IMR-90 (cell line): ENCODE measurements at regions of chr17 and their contacts with region 1.

Region 1: GRCh38 chr17:82241183-82241925 is 12.5 kb downstream of the SLC16A3 start:
- DNase-seq: peak; percentile 36
- ATAC-seq: peak; percentile 9
- H3K4me3 ChIP-seq: no peak overlapping the region
- H3K27ac ChIP-seq: peak overlapping the region; percentile 50
- H3K4me1 ChIP-seq: peaks cover 39% of the 10 kb centered on the region
- H3K27me3 ChIP-seq: no peaks in the 10 kb centered on the region
- CTCF ChIP-seq: no peak
- POLR2A ChIP-seq: no peak
- RAD21 ChIP-seq: no peak

Region 2: DNA sequence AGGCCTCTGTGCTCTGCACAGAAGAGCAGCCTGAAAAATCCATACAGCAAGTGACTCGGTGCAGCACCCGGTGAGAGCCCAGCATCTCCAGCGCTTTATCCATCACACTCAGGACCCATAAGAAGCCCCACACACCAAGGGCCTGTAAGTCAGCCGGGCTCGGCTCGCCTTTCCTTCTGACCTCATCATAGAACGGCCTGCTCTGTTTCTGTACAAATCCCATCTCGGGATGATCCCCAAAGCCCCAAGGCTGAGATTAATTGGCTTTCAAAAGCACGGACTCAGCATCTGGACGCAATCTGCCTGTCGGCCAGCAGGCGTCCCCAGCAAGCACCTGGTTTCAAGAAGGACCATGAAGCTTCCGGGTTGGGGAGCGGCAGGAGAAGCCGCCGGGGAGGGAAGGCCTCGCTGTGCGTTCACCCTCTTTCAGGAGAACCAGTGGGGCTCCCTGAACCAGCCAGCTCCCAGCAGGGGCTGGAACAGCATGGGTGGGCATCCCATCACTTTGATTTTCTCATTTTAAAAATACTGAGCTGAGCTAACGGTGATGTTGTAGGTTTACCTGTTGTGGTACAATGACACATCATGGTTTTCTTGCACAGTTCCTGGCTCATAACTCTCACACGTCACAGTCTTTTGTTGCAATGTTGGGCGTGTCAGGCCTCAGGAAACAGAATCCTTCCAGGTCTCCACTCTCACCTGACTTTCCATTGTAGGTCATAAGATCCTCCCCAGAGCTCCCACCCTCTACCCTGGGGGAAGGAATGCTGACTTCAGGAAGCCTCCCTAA is 35.4 kb before region 1 on chr17:
- CTCF ChIA-PET with region 1: interaction called, 3 read pairs
- POLR2A ChIA-PET with region 1: no interaction called
- dilution Hi-C with region 1: no loop called
- in situ Hi-C with region 1: no loop called
- intact Hi-C with region 1: loop called (anchors 5 kb)
- DNase-seq: peak; percentile 84
- ATAC-seq: peak; percentile 91
- H3K4me3 ChIP-seq: no peak overlapping the region
- H3K27ac ChIP-seq: peak overlapping the region; percentile 12
- H3K4me1 ChIP-seq: peaks cover 11% of the 10 kb centered on the region
- H3K27me3 ChIP-seq: no peaks in the 10 kb centered on the region
- CTCF ChIP-seq: peak; percentile 82
- POLR2A ChIP-seq: no peak
- RAD21 ChIP-seq: peak; percentile 76

Region 3: DNA sequence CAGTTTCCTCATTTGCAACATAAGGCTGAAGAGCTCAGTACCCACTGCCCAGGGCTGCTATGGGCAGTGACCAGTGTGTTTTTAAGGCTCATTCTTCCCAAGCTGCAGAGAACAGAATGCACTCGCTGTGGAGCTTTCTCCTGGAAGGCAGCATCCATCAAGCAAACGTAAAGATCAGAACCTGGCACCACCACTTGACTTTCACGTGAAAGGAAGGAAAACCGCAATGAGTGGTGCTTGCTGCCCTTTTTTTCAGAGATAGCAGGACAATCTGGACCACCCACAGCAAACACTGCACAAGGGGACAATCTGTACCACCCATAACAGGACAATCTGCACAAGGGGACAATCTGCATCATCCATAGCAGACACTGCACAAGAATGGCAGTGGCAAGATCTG is 21.0 kb after region 1 on chr17:
- CTCF ChIA-PET with region 1: no interaction called
- POLR2A ChIA-PET with region 1: no interaction called
- dilution Hi-C with region 1: no loop called
- in situ Hi-C with region 1: no loop called
- intact Hi-C with region 1: no loop called
- DNase-seq: no peak
- ATAC-seq: no peak
- H3K4me3 ChIP-seq: no peak overlapping the region
- H3K27ac ChIP-seq: no peak overlapping the region
- H3K4me1 ChIP-seq: peaks cover 12% of the 10 kb centered on the region
- H3K27me3 ChIP-seq: no peaks in the 10 kb centered on the region
- CTCF ChIP-seq: no peak
- POLR2A ChIP-seq: no peak
- RAD21 ChIP-seq: no peak

Region 4: DNA sequence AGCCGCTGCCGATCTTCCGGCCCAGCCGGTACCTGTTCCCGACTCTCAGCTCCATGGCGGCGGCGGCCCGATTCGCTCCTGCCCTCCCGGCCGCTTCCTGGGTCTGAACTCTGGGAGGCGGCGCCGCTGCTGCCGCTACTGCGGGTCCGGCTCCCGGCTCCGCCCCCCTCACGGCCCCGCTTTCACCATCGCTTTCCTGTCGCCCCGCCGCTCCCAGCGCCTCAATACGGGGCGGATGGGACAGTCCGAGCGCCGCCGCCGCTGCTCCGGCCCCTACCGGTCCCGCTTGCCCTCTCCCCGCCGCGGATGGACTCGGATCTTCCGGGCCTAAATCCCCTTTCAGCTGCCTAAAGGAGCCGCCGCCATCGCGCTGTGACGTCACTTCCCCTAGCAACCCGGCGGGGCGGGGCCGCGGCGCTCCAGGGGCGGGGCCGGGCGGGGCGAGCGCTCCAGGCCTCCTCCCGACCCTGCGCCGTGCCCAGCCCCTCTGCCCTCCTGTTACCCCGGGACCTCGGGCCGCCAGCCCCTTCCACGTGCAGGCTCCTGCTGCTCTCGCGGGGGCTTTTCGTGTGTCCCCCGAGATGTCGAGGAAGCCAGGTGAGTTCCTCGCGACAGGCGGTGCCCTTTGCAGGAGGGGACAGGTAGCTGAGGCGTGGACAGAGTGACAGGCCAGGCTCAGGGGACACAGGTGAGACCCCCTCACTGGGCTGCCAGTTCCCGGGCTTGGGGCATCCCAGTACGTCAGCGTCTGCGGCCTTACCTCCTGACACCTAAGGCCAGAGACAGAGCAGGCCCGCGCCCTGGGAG is 32.2 kb after region 1 on chr17 and contains the start of gene CSNK1D:
- CTCF ChIA-PET with region 1: no interaction called
- POLR2A ChIA-PET with region 1: no interaction called
- dilution Hi-C with region 1: no loop called
- in situ Hi-C with region 1: no loop called
- intact Hi-C with region 1: no loop called
- DNase-seq: peak; percentile 74
- ATAC-seq: peak; percentile 93
- H3K4me3 ChIP-seq: peak within 1 kb of the TSS; percentile 99
- H3K27ac ChIP-seq: peak within 1 kb of the TSS; percentile 96
- H3K4me1 ChIP-seq: peaks cover 24% of the 10 kb centered on the region
- H3K27me3 ChIP-seq: no peaks in the 10 kb centered on the region
- CTCF ChIP-seq: no peak
- POLR2A ChIP-seq: peak; percentile 90
- RAD21 ChIP-seq: no peak
- total RNA-seq, gene CSNK1D: 38.3 and 47.1 TPM in 2 replicates

Region 5: DNA sequence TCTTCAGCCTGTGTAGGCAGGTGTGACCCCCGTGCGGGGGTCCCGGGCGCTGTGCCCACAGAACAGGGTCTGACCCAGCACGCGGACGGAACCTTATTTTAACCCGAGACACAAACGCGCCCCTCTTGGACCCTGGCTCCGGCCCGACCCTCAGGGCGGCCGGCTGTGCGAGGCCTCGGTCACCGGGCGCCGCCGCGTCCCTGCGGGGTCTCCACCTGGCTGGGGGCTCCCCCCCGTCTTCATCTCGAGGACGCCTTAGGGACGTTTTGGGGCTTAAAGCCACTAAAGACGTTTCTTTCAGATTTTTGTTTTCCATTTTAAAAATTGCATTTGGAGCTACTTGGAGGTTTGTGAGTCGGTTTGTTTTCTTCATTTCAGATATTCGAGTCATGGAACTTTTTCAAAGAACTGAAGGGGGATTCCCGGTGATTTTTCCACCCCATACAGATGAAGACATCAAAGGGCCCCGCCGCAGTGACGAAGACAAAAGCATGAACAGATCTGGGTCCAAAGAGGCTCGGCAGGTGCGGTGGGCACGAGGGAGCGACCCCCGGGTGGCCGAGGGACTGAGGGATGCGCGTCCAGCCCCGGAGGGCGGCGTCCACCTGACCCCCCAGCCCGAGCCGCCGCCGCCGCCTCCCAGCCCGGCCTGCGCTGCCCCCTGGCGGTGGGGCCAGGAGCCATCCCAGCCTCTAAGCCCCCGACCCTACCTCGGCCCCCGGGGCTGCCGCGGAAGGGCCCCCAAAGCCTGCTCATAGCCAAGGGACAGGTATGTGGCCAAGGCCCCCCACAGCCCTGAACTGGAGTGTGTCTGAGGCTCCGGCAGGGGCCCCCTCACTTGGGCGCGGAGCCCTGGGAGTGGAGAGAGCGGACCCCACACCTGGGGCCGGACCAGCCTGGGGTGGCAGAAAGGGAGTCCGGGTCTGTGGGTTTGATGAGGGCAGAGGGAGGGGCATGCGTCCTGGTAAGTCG is 79.9 kb after region 1 on chr17:
- CTCF ChIA-PET with region 1: no interaction called
- POLR2A ChIA-PET with region 1: no interaction called
- dilution Hi-C with region 1: no loop called
- in situ Hi-C with region 1: no loop called
- intact Hi-C with region 1: loop called (anchors 5 kb)
- DNase-seq: no peak
- ATAC-seq: peak; percentile 80
- H3K4me3 ChIP-seq: no peak overlapping the region
- H3K27ac ChIP-seq: no peak overlapping the region
- H3K4me1 ChIP-seq: no peaks in the 10 kb centered on the region
- H3K27me3 ChIP-seq: peaks cover 10% of the 10 kb centered on the region; the same call in 1 of the 2 replicates
- CTCF ChIP-seq: peak; percentile 66
- POLR2A ChIP-seq: no peak
- RAD21 ChIP-seq: peak; percentile 70

Region 6: GRCh38 chr17:82400830-82401229 is 159.5 kb after region 1 on chr17:
- CTCF ChIA-PET with region 1: no interaction called
- POLR2A ChIA-PET with region 1: no interaction called
- dilution Hi-C with region 1: no loop called
- in situ Hi-C with region 1: no loop called
- intact Hi-C with region 1: no loop called
- DNase-seq: no peak
- ATAC-seq: no peak
- H3K4me3 ChIP-seq: no peak overlapping the region
- H3K27ac ChIP-seq: no peak overlapping the region
- H3K4me1 ChIP-seq: peaks cover 12% of the 10 kb centered on the region
- H3K27me3 ChIP-seq: no peaks in the 10 kb centered on the region
- CTCF ChIP-seq: no peak
- POLR2A ChIP-seq: no peak
- RAD21 ChIP-seq: no peak

Region 7: GRCh38 chr17:82414548-82415281 is 173.4 kb after region 1 on chr17:
- CTCF ChIA-PET with region 1: no interaction called
- POLR2A ChIA-PET with region 1: no interaction called
- dilution Hi-C with region 1: no loop called
- in situ Hi-C with region 1: no loop called
- intact Hi-C with region 1: loop called (anchors 5 kb)
- DNase-seq: peak; percentile 50
- ATAC-seq: peak; percentile 61
- H3K4me3 ChIP-seq: no peak overlapping the region
- H3K27ac ChIP-seq: no peak overlapping the region
- H3K4me1 ChIP-seq: no peaks in the 10 kb centered on the region
- H3K27me3 ChIP-seq: no peaks in the 10 kb centered on the region
- CTCF ChIP-seq: peak; percentile 60
- POLR2A ChIP-seq: no peak
- RAD21 ChIP-seq: peak; percentile 73